Activated CD8-positive, alpha-beta T cell treated with anti-CD3 and anti-CD28 coated beads, Interleukin-2, amount 10 ng/mL, durations not matched to agents 7 days and 5 days (primary cell): ENCODE measurements at regions of chr2 and their contacts with region 1.

Region 1: DNA sequence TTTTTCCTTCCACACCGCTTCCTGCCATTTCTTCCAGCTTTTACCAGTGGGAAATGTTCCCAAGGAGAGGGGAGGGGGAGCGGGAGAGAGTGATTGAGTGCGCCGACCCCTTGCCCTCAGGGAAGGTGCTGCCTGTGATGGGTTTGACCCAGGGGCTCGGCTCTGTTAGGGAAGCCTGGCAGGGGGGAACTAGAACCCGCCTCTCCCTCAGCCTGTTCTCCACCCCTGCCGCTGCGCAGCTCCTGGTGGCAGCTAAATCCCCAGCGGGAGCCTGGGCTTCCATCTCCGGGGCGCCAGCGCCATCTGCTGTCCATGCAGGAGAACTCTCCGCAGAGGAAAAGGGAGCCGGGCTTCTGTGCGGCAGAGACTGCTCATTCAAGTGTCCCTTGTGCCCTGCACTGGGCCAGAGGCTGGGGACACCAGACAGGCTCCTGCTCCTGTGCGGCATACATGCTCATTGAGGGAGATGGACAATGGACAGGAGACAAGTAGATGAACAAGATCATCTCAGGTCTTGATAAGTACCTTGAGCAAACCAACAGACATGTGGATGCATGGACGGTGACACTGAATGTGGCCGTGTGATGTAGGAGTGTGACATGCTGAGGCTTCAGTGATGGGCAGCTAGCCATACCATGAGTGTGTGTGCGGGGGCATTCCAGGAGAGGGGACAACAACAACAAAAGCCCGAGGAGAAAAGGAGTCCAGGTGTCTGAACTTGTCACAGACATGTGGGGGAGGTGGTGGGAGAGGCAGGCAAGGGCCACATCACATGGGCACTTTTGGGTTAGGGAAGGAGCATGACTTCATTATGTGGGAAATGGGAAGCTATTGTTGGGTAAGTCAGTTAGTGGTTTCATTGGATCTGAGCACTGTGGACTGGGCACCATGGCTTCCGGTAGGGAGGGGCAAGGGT is 13.3 kb downstream of the CHPF start:
- DNase-seq: peak; percentile 87
- ATAC-seq: peak; percentile 95
- H3K4me3 Mint-ChIP-seq: no peak overlapping the region
- H3K27ac Mint-ChIP-seq: no peak overlapping the region
- H3K4me1 Mint-ChIP-seq: no peaks in the 10 kb centered on the region
- H3K27me3 Mint-ChIP-seq: peaks cover 51% of the 10 kb centered on the region

Region 2: GRCh38 chr2:219388127-219388844 is 142.0 kb before region 1 on chr2:
- CTCF ChIA-PET with region 1: interaction called, 10 read pairs
- POLR2A ChIA-PET with region 1: no interaction called
- DNase-seq: peak; percentile 99
- ATAC-seq: peak; percentile 77
- H3K4me3 Mint-ChIP-seq: peak overlapping the region; percentile 70
- H3K27ac Mint-ChIP-seq: peak overlapping the region; percentile 87
- H3K4me1 Mint-ChIP-seq: peaks cover 18% of the 10 kb centered on the region
- H3K27me3 Mint-ChIP-seq: peaks cover 5% of the 10 kb centered on the region

Region 3: DNA sequence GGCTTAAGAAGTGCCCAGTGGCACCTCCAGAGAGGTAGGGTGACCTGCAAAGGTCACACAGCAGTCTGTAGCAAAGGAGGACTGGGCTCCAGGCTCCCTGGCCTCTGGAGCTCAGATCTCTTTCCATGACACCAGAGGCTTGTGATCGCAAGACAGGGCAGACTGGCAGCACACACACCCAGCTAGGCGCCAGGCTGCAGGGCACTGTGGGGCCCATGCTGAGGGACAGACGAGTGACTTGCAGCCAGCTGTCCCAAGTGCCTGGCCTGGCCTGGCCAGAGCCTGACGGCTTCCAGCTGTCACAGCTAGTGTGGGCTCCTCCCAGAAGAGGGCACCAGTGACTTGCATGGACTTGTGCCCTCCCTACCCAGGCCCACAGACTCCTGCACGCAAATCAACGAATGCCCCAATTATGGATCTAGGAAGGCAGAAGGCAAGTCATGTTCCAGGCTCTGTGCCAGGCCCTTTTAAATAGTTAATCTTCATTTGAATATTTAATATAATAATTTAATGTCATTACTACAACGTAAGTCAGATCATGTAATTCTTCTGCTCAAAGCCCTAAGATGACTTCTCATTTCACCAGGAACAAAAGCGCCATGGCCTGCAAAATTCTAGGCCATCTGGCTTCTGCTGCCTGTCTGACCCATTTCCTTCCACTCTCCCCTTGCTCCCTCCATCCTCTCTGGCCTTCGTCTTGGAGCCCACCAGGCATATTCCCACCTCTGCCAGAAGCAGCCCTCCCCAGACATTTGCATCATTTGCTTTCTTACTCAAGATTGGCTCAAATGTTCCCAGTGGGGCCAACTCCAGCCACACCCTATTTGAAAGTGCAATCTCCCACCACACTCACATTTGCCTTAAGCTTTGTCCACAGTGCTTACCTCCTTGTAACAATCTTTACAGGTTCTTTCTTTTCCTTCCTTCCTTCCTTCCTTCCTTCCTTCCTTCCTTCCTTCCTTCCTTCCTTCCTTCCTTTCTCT is 99.4 kb before region 1 on chr2:
- CTCF ChIA-PET with region 1: interaction called, 22 read pairs
- POLR2A ChIA-PET with region 1: interaction called, 3 read pairs
- DNase-seq: no peak
- ATAC-seq: peak; percentile 56
- H3K4me3 Mint-ChIP-seq: no peak overlapping the region
- H3K27ac Mint-ChIP-seq: no peak overlapping the region
- H3K4me1 Mint-ChIP-seq: peaks cover 2% of the 10 kb centered on the region
- H3K27me3 Mint-ChIP-seq: peaks cover 20% of the 10 kb centered on the region

Region 4: DNA sequence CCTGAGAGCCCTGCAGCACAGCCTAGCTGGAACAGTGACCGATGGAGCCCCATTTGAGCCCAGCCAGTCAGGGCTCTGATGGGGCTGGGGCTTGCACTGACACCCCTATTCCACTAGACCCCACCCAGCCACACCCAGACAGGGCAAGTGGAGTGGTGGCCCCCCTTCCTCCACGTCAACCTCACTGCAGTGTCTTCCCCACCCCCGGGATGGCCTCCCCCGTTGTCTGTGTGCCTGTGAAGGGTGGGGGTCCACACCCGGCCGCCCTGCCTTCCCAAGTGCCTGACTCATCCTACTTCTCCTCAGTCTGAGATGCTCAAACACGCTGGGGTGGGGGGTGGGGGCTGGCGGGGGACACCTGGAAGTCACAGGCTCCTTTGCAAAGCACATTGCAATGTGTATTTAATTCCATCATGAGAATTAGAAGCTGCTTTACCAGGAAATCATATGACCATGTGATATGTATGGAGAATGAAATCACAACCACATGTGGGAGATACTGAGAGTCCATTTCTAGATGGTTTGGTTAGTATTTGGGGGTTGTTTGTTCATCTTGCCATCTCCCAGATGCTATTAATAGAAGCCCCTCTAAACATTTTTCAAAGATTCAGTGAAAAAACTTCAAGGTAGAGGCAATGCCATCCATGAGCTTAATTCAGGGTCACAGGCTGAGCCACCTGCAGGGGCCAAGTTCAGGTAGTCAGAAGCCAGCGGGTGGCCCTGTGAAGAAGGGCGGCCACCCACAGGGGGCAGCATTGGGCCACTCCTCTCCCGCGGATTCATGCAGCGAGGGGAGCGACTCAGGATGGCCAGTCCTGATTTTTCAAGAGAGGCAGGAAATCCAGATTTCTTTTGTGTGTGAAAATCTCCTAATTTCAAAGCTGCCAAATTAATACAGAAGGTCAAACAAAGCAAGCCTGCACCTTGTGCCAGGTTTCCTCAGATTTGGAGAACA is 54.3 kb before region 1 on chr2:
- CTCF ChIA-PET with region 1: interaction called, 42 read pairs
- POLR2A ChIA-PET with region 1: no interaction called
- DNase-seq: peak; percentile 75
- ATAC-seq: peak; percentile 83
- H3K4me3 Mint-ChIP-seq: no peak overlapping the region
- H3K27ac Mint-ChIP-seq: no peak overlapping the region
- H3K4me1 Mint-ChIP-seq: peaks cover 5% of the 10 kb centered on the region
- H3K27me3 Mint-ChIP-seq: peaks cover 2% of the 10 kb centered on the region

Region 5: GRCh38 chr2:219498280-219499057 is 31.8 kb before region 1 on chr2 and contains the start of gene GMPPA:
- CTCF ChIA-PET with region 1: interaction called, 71 read pairs
- POLR2A ChIA-PET with region 1: no interaction called
- DNase-seq: peak; percentile 97
- ATAC-seq: peak; percentile 96
- H3K4me3 Mint-ChIP-seq: peak within 1 kb of the TSS; percentile 83
- H3K27ac Mint-ChIP-seq: peak within 1 kb of the TSS; percentile 73
- H3K4me1 Mint-ChIP-seq: peaks cover 43% of the 10 kb centered on the region
- H3K27me3 Mint-ChIP-seq: peaks cover 42% of the 10 kb centered on the region
- total RNA-seq, gene GMPPA: 37.8 to 41.2 TPM

Region 6: GRCh38 chr2:219543601-219544358 is 13.5 kb after region 1 on chr2 and contains the starts of genes CHPF and TMEM198:
- CTCF ChIA-PET with region 1: interaction called, 39 read pairs
- POLR2A ChIA-PET with region 1: no interaction called
- DNase-seq: peak; percentile 95
- ATAC-seq: peak; percentile 71
- H3K4me3 Mint-ChIP-seq: peak within 1 kb of the TSS; percentile 73
- H3K27ac Mint-ChIP-seq: peak within 1 kb of the TSS; percentile 78
- H3K4me1 Mint-ChIP-seq: peaks cover 25% of the 10 kb centered on the region
- H3K27me3 Mint-ChIP-seq: peaks cover 24% of the 10 kb centered on the region
- total RNA-seq, gene CHPF: 7.1 to 7.3 TPM
- total RNA-seq, gene TMEM198: 0.47 to 0.60 TPM

Region 7: DNA sequence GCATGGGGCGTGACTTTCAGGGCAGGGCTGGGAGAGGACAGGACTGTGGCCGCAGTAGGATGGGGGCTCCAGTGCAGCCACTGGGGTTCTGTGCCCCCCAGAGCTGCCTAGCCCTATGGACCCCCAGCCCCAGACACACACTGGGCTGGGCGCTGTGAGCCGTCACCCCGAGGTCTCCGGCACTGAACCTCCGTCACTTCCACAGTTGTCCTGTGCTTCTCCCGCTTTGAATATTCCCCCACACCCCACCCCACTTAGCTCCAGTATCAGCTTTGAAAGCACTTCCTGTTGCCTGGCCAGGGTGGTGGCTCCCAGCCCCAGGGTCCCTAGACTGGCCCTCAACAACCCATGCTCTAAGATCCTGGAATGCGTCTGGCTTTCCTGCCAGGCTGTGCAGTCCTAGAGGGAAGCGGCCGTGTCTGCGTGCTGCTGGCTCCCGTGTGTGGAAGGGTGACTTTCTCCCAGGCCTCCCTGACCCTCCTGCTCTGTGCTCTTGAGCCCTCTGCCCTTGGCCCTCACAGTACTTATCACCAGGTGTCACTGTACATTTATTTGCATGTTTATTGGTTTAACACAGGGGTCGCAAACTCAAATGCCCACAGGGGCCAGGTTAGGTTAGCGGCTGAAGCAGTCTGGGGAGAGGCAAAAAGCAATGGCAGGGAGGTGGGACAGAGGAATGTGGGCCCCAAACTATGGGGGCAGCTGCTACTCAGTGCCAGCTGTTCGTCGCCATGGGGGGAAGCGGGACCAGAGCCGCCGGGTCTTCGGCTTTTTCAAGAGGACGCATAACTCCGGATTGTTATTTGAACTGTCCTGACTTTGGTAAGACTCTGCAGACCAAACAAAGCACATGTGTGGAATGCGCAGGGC is 31.1 kb after region 1 on chr2:
- CTCF ChIA-PET with region 1: no interaction called
- POLR2A ChIA-PET with region 1: no interaction called
- DNase-seq: no peak
- ATAC-seq: no peak
- H3K4me3 Mint-ChIP-seq: no peak overlapping the region
- H3K27ac Mint-ChIP-seq: no peak overlapping the region
- H3K4me1 Mint-ChIP-seq: no peaks in the 10 kb centered on the region
- H3K27me3 Mint-ChIP-seq: no peaks in the 10 kb centered on the region